H1 (cell line): ENCODE measurements at regions of chr11 and their contacts with region 1.

Region 1: GRCh38 chr11:93529707-93530467 is 13.3 kb downstream of the SMCO4 start:
- DNase-seq: no peak
- H3K4me3 ChIP-seq: no peak overlapping the region
- H3K27ac ChIP-seq: no peak overlapping the region
- H3K4me1 ChIP-seq: peaks cover 0 to 7% (median 6%) of the 10 kb centered on the region in 4 experiments; a peak in 4 of 7 replicates
- H3K27me3 ChIP-seq: no peaks in the 10 kb centered on the region
- CTCF ChIP-seq: no peak
- EP300 ChIP-seq: no peak
- POLR2A ChIP-seq: no peak
- RAD21 ChIP-seq: no peak

Region 2: DNA sequence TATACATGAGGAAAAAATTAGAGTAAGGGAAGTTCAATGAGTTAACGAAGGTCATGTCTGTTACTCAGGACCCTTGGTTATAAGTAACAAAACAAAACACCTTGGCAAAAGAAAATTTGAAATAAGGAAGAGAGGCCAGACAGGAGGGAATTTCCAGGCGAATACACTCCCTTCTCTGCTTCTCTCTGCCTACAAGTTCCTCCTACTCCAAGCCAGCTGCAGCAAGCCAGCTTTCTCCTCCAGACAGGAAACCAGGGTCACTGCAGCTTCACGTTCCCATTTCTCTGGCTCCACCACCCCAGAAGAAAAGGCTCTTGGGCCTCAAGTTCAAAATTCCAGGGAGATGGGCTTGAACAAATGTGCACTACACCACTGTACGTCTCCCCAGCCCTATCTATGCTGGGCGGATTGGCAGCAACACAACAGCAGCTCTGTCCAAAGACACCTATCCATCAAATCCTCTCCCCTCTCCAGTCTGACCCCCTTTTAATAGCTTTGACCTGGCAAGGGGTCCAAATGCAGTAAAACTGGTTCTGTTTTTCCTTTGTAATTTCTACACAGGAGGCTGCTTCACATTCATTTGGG is 14.4 kb before region 1 on chr11:
- CTCF ChIA-PET with region 1: interaction called, 12 read pairs
- POLR2A ChIA-PET with region 1: no interaction called
- DNase-seq: no peak
- H3K4me3 ChIP-seq: no peak overlapping the region
- H3K27ac ChIP-seq: no peak overlapping the region
- H3K4me1 ChIP-seq: peaks cover 0 to 7% (median 0%) of the 10 kb centered on the region in 4 experiments; a peak in 4 of 7 replicates
- H3K27me3 ChIP-seq: no peaks in the 10 kb centered on the region
- CTCF ChIP-seq: no peak
- EP300 ChIP-seq: no peak
- POLR2A ChIP-seq: no peak
- RAD21 ChIP-seq: no peak